Activated T-helper 1 cell treated with anti-CD3 and anti-CD28 coated beads, Interleukin-12 subunit alpha, Interleukin-12 subunit beta, Interleukin-2, Interleukin-4 antibody, amounts not matched to agents 30 ng/mL and 10 ng/mL and 1 ng/mL, durations not matched to agents 14 hours and 24 hours and 36 hours (primary cell): ENCODE measurements at regions of chr14 and their contacts with region 1.

Region 1: GRCh38 chr14:75126679-75127473 is at the start of gene NEK9:
- DNase-seq: peak; percentile 86
- H3K4me3 Mint-ChIP-seq: peak within 1 kb of the TSS; percentile 93
- H3K27ac Mint-ChIP-seq: peak within 1 kb of the TSS; percentile 97
- H3K4me1 Mint-ChIP-seq: peaks cover 39% of the 10 kb centered on the region
- H3K27me3 Mint-ChIP-seq: no peaks in the 10 kb centered on the region
- total RNA-seq, gene NEK9: 76.8 and 77.0 TPM in 2 replicates

Region 2: DNA sequence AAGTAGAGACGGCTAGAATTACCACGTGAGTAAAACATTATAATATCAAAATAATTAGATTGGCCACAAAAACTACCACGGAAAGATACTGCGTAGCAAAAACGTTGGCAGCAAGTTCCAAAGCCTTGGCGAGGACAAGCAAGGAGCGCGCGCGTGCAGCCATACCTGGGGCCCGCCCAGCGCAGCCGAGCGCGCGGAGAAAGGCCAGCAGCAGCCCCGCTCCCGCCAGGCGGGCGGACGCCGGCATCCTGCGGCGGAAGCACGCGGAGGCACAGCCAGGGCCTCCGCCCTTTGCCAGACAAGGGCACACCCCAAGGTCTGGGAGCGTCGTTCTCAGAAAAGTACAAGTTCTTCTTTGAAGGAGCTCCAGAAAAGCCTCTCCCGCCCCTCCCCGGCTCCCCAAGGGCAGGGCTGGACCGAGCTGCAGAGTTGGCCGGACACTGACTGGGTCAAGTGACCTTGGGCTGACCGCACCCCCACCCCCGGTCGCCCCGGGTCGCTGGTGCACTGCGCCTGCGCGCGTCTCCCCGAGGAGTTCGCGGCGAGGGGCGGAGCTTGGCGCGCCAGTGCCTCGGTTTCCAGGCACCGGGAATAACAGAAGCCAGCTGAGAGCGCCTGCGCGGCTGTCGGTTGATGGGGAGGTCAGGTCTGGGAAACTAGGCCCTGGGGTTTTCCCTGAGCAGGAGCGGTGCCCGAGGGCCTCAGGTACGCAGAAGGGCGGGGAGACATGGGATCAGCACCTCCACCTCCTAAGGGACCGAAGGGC is 57.6 kb before region 1 on chr14 and contains the start of gene ZC2HC1C:
- intact Hi-C with region 1: loop called (anchors 2 kb)
- DNase-seq: peak; percentile 65
- H3K4me3 Mint-ChIP-seq: no peak within 1 kb of the TSS
- H3K27ac Mint-ChIP-seq: peak within 1 kb of the TSS; percentile 66
- H3K4me1 Mint-ChIP-seq: peaks cover 5% of the 10 kb centered on the region
- H3K27me3 Mint-ChIP-seq: no peaks in the 10 kb centered on the region
- total RNA-seq, gene ZC2HC1C: 0.71 and 0.80 TPM in 2 replicates

Region 3: GRCh38 chr14:75566321-75566720 is 439.4 kb after region 1 on chr14:
- intact Hi-C with region 1: loop called (anchors 2 kb)
- DNase-seq: peak; percentile 68
- H3K4me3 Mint-ChIP-seq: peak overlapping the region; percentile 66
- H3K27ac Mint-ChIP-seq: peak overlapping the region; percentile 87
- H3K4me1 Mint-ChIP-seq: peaks cover 76% of the 10 kb centered on the region
- H3K27me3 Mint-ChIP-seq: no peaks in the 10 kb centered on the region

Region 4: DNA sequence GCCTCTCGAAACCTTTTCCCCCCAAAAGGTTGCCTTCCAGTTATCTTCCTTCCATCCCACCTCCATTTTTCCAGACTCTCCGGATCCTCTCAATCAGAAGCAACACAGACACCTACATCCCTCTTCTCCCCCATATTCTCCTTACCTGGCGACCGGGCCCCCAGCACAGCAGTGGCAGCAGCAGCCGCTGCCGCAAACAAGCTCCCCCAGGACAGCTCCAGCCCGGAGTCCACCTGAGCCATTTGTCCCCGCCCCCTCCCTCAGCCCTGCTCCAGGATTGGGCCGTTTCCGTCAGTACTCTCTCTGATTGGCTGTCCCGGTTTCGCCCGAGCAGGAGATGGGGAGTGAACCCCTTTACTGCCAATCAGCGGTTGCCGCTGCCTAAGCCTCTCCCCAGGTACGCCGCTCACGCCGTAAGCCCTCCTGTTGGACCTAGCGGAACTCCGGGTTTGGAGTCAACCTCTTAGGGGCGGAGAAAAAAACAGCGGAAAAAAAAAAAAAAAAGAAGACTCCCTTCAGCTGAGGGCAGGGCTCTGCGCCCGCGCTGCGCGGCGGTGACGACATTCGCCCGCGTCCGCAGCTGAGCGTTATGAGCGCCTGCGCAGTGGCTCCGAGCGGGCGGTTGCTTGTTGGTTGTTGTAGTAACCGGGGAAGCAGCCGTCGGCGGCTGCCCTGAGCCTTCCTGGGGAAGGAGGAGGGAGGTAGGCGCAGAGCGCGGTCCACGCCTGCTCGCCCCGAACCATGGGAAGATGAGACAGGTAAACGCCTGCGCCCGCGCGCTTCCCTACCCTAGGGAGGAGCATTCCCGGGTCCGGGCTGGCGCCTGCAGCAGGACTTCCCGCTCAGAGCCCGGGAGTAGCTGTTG is 534.0 kb after region 1 on chr14 and contains the starts of genes ERG28 and TTLL5:
- intact Hi-C with region 1: loop called (anchors 2 kb)
- DNase-seq: peak; percentile 97
- H3K4me3 Mint-ChIP-seq: peak within 1 kb of the TSS; percentile 100
- H3K27ac Mint-ChIP-seq: peak within 1 kb of the TSS; percentile 94
- H3K4me1 Mint-ChIP-seq: peaks cover 38% of the 10 kb centered on the region
- H3K27me3 Mint-ChIP-seq: no peaks in the 10 kb centered on the region
- total RNA-seq, gene ERG28: 17.5 and 17.8 TPM in 2 replicates
- total RNA-seq, gene TTLL5: 36.2 and 39.0 TPM in 2 replicates